ENCODE measurements at regions of chr16 and their contacts with region 1.

Region 1: GRCh38 chr16:30091474-30092372 is at the start of gene TBX6:
- DNase-seq: peak; percentile 93
- H3K4me3 ChIP-seq: peak within 1 kb of the TSS; percentile 60
- H3K27ac ChIP-seq: peak within 1 kb of the TSS; percentile 84
- H3K4me1 ChIP-seq: peaks cover 13% of the 10 kb centered on the region
- H3K27me3 ChIP-seq: no peaks in the 10 kb centered on the region
- CTCF ChIP-seq: peak; percentile 78
- total RNA-seq, gene TBX6: 0.85 to 1.6 TPM

Region 2: GRCh38 chr16:29951625-29952365 is 139.9 kb before region 1 on chr16:
- intact Hi-C with region 1: no loop called
- DNase-seq: no peak
- H3K4me3 ChIP-seq: no peak overlapping the region
- H3K27ac ChIP-seq: no peak overlapping the region
- H3K4me1 ChIP-seq: no peaks in the 10 kb centered on the region
- H3K27me3 ChIP-seq: no peaks in the 10 kb centered on the region
- CTCF ChIP-seq: no peak

Region 3: GRCh38 chr16:30355144-30355894 is 263.6 kb after region 1 on chr16 and contains the start of gene CD2BP2:
- intact Hi-C with region 1: loop called (anchors 10 kb)
- DNase-seq: peak; percentile 98
- H3K4me3 ChIP-seq: peak within 1 kb of the TSS; percentile 80
- H3K27ac ChIP-seq: peak within 1 kb of the TSS; percentile 94
- H3K4me1 ChIP-seq: peaks cover 7% of the 10 kb centered on the region
- H3K27me3 ChIP-seq: no peaks in the 10 kb centered on the region
- CTCF ChIP-seq: no peak
- total RNA-seq, gene CD2BP2: 44.8 to 76.1 TPM

Region 4: DNA sequence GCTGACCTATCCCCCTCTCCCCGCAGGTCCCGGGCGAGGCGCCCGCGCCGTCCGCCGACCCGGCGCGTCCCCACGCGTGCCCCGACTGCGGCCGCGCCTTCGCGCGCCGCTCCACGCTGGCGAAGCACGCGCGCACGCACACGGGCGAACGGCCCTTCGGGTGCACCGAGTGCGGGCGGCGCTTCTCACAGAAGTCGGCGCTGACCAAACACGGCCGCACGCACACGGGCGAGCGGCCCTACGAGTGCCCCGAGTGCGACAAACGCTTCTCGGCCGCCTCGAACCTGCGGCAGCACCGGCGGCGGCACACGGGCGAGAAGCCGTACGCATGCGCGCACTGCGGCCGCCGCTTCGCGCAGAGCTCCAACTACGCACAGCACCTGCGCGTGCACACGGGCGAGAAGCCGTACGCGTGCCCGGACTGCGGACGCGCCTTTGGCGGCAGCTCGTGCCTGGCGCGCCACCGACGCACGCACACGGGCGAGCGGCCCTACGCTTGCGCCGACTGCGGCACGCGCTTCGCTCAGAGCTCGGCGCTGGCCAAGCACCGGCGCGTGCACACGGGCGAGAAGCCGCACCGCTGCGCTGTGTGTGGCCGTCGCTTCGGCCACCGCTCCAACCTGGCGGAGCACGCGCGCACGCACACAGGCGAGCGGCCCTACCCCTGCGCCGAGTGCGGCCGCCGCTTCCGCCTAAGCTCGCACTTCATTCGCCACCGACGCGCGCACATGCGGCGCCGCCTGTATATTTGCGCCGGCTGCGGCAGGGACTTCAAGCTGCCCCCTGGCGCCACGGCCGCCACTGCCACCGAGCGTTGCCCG is 326.0 kb after region 1 on chr16:
- intact Hi-C with region 1: loop called (anchors 10 kb)
- DNase-seq: peak; percentile 87
- H3K4me3 ChIP-seq: peak overlapping the region; percentile 52
- H3K27ac ChIP-seq: peak overlapping the region; percentile 71
- H3K4me1 ChIP-seq: peaks cover 3% of the 10 kb centered on the region
- H3K27me3 ChIP-seq: no peaks in the 10 kb centered on the region
- CTCF ChIP-seq: no peak

Measured in colonic mucosa (tissue), 4 donors.